Lower leg skin (tissue), 4 donors: ENCODE measurements at regions of chr17 and their contacts with region 1.

Region 1: DNA sequence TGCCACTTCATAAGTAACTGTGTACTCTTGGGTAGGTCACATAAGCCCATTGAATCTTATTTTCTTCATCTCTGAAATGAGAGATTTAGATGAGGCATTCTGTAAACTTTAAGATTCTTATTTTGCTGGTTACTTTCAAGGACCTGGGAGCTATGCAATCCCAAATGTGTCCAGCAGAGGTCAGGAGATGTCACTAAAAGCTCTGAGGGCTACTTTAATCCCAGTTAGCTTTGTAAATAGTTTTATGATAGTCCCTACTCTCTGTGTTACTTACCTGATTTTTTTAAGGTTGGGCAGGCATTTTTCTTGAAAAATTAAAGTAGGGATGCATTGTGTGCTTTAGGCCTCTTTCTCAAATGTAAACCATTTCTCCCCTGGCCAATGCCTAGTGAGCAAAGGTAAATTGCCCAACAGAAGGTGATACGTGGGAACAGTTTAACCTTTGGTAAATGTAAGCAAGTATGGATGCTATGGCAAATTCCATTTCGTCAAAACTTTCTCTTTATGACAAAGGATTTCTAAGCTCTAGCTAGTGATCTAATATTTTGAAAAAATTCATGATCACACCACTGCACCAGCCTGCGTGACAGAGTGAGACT is 57.1 kb upstream of the WSB1 start:
- DNase-seq: peak; percentile 87 to 95
- H3K4me3 ChIP-seq: no peak overlapping the region
- CTCF ChIP-seq: peak in 1 of 3 donors; percentile 79
- POLR2A ChIP-seq: no peak

Region 2: DNA sequence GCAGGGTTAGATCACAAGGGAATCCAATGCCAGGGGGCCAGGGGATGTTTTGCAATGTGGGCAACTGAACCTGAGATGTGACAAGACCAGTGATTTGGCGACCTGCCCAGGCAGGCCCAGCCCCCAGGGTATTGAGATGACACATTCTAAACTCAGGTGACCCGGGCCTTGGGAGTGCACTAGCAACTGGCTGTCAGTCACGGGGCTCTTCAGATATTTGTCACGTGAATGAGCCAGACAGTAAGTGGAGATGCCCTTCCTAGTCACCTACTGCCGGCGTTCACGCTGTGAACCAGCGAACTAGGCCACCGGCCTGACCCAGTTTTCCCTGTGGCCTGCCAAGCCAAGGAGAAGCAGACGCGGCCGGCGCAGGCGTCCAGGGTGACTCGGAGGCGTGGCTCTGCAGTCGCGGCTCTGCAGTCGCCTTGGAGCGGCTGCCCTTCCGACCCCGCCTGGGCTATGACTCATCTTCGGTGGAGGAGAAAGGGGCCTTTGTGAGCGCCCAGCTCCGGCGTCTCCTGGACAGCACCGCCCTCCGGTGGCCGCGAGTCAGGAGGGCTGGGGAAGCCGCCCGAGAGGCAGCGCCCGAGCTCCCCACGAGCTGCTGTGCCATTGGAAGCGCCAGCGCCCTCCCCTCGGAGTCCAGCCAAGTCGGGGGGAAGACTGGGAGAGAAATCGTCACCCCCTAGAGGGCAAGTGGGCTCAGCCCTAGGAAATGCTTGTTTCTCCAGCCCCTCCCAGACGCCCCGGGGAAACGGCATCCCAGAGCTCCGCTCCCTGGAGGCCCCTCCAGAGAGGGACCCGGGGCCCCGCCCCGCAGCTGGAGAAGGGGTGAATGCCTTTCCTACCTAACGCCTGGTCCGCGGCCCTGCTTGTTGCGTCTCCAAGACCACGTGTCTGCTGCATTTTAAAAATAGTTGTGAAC is 95.9 kb after region 1 on chr17:
- intact Hi-C with region 1: no loop called
- DNase-seq: peak; percentile 96 to 100
- H3K4me3 ChIP-seq: peak overlapping the region; percentile 20
- CTCF ChIP-seq: peak in 1 of 3 donors; percentile 80
- POLR2A ChIP-seq: no peak

Region 3: GRCh38 chr17:27345141-27345904 is 108.5 kb after region 1 on chr17:
- intact Hi-C with region 1: loop called (anchors 5 kb)
- DNase-seq: no peak
- H3K4me3 ChIP-seq: no peak overlapping the region
- CTCF ChIP-seq: no peak
- POLR2A ChIP-seq: no peak

Region 4: GRCh38 chr17:27396941-27397340 is 160.1 kb after region 1 on chr17:
- intact Hi-C with region 1: no loop called
- DNase-seq: peak in 1 of 2 donors; percentile 70
- H3K4me3 ChIP-seq: no peak overlapping the region
- CTCF ChIP-seq: no peak
- POLR2A ChIP-seq: no peak